ENCODE measurements at regions of chr1 and their contacts with region 1.

Region 1: DNA sequence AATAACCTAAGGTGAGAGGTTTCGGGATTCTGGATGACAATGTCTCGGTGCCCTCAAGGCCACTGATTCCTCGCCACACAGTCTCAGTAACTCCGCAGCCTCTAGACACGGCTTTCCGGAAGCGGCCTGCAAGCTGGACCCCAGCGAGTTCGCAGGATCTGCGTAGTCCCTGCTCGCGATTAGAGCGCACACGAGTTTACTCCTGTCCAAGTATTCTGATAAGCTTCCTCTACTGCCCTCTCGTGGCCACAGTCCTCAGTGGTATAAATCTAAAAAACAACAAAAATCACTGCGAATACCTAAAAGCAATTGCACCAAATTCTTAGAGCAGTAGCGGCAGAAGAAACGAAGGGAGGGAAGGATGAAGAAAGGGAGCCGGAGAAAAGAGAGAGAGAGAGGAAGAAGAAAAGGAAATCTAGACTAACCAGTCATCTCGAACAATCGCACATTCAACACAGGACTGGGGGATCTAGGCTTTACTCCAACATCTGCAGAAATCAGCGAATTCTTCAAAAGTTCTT is 1.1 kb upstream of the PLXNA2 start:
- DNase-seq: peak; percentile 92 to 97 (median 95)
- H3K4me3 ChIP-seq: peak overlapping the region; percentile 71
- H3K27ac ChIP-seq: peak overlapping the region; percentile 40 to 80
- H3K4me1 ChIP-seq: peaks cover 8% of the 10 kb centered on the region
- H3K27me3 ChIP-seq: no peaks in the 10 kb centered on the region
- CTCF ChIP-seq: peak; percentile 83 to 95 (median 94)
- EP300 ChIP-seq: no peak
- POLR2A ChIP-seq: peak; percentile 22

Region 2: DNA sequence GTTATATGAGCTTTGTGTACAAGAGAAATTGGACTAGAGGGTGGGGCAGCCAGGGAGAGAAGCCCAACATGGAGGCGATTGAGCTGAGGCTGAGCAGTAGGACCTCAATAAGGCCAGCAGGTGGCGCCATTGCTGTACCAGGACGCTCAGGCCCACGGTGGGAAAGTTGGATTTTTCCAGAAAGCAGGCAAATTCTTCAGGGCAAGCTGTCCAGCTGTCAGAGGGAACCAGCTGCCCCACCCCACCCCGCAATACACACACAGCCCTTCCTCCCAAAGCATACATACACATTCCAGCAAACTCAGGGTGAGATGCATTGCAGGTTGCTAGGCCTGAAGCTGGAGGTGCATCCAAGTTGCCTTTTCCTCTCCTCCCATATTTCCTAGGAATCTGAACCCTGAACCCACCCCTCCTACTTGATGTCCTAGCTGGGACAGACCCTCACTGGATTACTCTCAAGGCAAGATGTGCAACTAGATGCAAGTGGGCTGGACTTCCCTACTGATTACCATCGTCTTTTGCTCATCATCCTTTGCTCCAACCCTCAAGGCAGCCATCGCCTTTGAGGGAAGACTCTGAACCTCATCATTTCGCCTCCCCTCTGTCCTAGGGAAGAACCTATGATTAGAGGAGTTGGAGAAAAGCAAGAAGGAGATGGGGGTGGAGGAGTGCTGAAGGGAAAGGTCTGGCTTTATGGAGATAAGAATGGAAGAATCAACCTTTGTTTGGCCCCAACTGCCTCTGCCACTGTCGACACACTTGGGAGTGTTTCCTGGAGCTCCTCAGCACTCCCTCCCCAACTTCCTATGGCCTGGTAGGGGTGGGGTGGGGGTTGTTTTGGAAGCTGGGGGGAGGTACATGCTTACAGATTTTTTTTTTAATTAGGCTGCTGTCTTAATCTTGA is 359.9 kb before region 1 on chr1:
- intact Hi-C with region 1: loop called in 2 of 4 experiments (anchors 5 to 10 kb)
- DNase-seq: peak; percentile 84 to 91 (median 89)
- H3K4me3 ChIP-seq: no peak overlapping the region
- H3K27ac ChIP-seq: no peak overlapping the region
- H3K4me1 ChIP-seq: peaks cover 6% of the 10 kb centered on the region
- H3K27me3 ChIP-seq: no peaks in the 10 kb centered on the region
- CTCF ChIP-seq: peak; percentile 91 to 98 (median 95)
- EP300 ChIP-seq: no peak
- POLR2A ChIP-seq: no peak

Region 3: GRCh38 chr1:208029381-208030287 is 215.6 kb before region 1 on chr1:
- intact Hi-C with region 1: loop called (anchors 5 kb)
- DNase-seq: peak in 3 of 5 donors; percentile 29 to 38 (median 35)
- H3K4me3 ChIP-seq: no peak overlapping the region
- H3K27ac ChIP-seq: peak overlapping the region; percentile 65 to 86
- H3K4me1 ChIP-seq: peaks cover 16% of the 10 kb centered on the region
- H3K27me3 ChIP-seq: no peaks in the 10 kb centered on the region
- CTCF ChIP-seq: no peak
- EP300 ChIP-seq: no peak
- POLR2A ChIP-seq: no peak

Region 4: DNA sequence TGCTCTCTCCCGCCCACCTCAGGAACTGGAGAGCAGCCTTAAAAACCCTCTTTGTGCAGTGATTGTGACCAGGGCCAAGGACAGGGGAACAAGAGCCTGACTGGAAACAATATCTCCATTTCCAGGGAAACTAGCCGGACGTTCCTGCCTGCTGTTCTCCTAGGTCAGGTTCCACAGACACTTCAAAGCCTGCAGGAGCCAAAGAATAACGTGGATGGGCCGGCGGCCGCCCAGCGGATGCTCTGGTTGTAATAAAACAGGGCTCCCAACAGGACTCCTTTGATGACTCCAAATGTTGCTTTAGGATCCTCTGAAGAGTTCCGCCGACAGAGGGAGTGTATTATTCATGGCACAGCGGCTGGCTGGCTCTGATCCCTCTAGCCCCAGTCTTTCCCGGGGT is 163.3 kb before region 1 on chr1:
- intact Hi-C with region 1: loop called in 2 of 4 experiments (anchors 5 to 10 kb)
- DNase-seq: peak; percentile 53 to 70 (median 66)
- H3K4me3 ChIP-seq: no peak overlapping the region
- H3K27ac ChIP-seq: peak overlapping the region in 1 of 2 donors; percentile 31
- H3K4me1 ChIP-seq: peaks cover 5% of the 10 kb centered on the region
- H3K27me3 ChIP-seq: no peaks in the 10 kb centered on the region
- CTCF ChIP-seq: peak; percentile 36 to 49 (median 43)
- EP300 ChIP-seq: no peak
- POLR2A ChIP-seq: no peak

Region 5: GRCh38 chr1:208132287-208132883 is 112.9 kb before region 1 on chr1:
- intact Hi-C with region 1: loop called in 2 of 4 experiments (anchors 5 to 10 kb)
- DNase-seq: peak; percentile 62 to 88 (median 80)
- H3K4me3 ChIP-seq: no peak overlapping the region
- H3K27ac ChIP-seq: no peak overlapping the region
- H3K4me1 ChIP-seq: peaks cover 25% of the 10 kb centered on the region
- H3K27me3 ChIP-seq: no peaks in the 10 kb centered on the region
- CTCF ChIP-seq: peak; percentile 14 to 57 (median 38)
- EP300 ChIP-seq: no peak
- POLR2A ChIP-seq: no peak

Measured in ovary (tissue), 10 donors.